WTC11 (cell line): ENCODE measurements at regions of chr14 and their contacts with region 1.

Region 1: DNA sequence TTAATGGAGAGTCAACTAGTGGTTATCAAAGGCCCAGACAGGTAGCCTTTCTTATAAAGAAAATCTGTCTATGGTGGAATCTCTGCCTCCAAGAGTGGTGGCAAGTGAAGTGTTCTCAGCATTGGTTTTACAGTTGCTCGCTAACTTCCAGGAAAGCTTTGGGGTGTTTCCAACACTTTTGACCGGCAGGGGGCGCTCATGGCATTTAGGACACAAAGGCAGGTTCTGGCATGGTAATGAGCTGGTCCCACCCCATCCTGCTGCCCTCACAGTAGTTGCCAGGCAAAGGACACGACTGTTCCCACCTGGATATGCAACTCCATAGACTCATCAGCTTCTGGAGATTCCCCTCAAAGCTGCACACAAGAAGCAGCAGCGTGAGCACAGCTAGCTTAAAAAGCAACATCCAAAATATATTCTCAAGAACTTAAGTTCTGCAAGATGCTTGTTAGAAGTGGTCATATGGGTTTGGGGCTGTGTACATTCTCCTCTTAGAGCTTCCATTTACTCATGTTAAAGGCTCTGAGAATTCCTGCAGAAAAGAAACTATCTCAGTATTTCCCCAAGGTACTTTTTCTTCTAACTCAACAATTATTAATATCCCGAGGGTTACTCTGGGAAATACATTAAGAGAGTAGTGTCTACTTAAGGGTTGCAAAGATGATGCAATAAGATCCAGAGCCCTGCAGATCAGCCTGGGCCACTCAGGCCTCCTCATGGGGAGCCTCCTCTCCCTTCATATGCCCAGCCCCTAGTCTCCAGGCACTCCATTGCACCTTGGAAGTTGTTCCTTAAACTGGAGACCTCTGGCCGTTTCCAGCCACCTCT is 14.8 kb downstream of the PROX2 start:
- DNase-seq: peak; percentile 95
- ATAC-seq: peak; percentile 95
- H3K4me3 Mint-ChIP-seq: no peak overlapping the region
- H3K27ac Mint-ChIP-seq: no peak overlapping the region
- H3K4me1 Mint-ChIP-seq: peaks cover 3% of the 10 kb centered on the region; the same call in 1 of the 2 replicates
- H3K27me3 Mint-ChIP-seq: no peaks in the 10 kb centered on the region; the same call in none of the 2 replicates
- CTCF ChIP-seq: peak; percentile 77

Region 2: GRCh38 chr14:74836251-74836960 is 24.7 kb before region 1 on chr14:
- CTCF ChIA-PET with region 1: interaction called, 11 read pairs
- POLR2A ChIA-PET with region 1: no interaction called
- DNase-seq: no peak
- ATAC-seq: no peak
- H3K4me3 Mint-ChIP-seq: no peak overlapping the region
- H3K27ac Mint-ChIP-seq: no peak overlapping the region
- H3K4me1 Mint-ChIP-seq: 0 out of 2 replicates have a peak, but pooled peaks cover under 1% of the 10 kb centered on the region
- H3K27me3 Mint-ChIP-seq: no peaks in the 10 kb centered on the region
- CTCF ChIP-seq: no peak

Region 3: GRCh38 chr14:74881431-74882361 is 20.6 kb after region 1 on chr14 and contains the start of gene DLST:
- CTCF ChIA-PET with region 1: interaction called, 133 read pairs
- POLR2A ChIA-PET with region 1: interaction called, 3 read pairs
- DNase-seq: peak; percentile 89
- ATAC-seq: peak; percentile 83
- H3K4me3 Mint-ChIP-seq: peak within 1 kb of the TSS; percentile 100
- H3K27ac Mint-ChIP-seq: peak within 1 kb of the TSS; percentile 98
- H3K4me1 Mint-ChIP-seq: peaks cover 51% of the 10 kb centered on the region
- H3K27me3 Mint-ChIP-seq: no peaks in the 10 kb centered on the region
- CTCF ChIP-seq: no peak
- total RNA-seq, gene DLST: 112 to 121 TPM (median 119 TPM) in 3 replicates

Region 4: DNA sequence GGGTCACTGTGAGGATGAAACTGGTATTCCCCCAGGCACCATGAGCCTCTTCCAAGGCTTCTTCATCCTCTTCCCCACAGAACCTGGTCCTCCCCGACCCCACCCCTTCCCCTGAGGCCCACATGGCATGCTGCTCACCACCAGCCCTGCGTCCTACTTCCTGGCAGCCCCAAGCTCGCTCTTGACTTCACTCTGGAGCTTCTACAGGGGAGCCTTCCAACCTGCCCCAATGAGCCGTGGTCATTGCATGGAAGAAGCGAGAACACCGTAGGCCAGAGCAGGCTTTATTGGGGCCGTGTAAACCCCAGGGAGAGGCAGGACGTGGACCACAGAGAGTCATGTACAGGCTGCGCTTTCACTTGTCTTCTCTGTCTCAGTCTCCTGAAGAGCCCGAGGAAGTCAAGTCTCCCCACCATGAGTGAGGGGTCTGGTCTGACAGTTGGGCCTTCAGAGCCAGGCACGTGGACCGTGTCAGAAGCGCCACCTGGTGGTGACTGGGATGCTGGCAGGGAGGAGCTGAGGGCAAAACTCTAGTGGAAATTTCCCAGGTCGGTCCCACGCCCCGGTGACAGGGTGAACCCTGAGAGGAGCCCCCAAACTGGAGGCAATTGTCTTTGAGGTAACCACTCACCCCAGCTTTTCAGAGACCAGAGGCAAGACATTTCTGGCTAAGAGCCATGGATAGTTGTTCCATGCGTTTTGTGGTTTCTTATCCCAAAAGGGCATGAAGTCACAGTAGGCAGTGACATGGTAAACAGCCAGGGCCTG is 44.4 kb after region 1 on chr14:
- CTCF ChIA-PET with region 1: interaction called, 241 read pairs
- POLR2A ChIA-PET with region 1: interaction called, 9 read pairs
- DNase-seq: peak; percentile 84
- ATAC-seq: peak; percentile 58
- H3K4me3 Mint-ChIP-seq: no peak overlapping the region
- H3K27ac Mint-ChIP-seq: 0 out of 2 replicates have a peak overlapping the region, but pooled peaks have one; percentile 41
- H3K4me1 Mint-ChIP-seq: peaks cover 13% of the 10 kb centered on the region
- H3K27me3 Mint-ChIP-seq: no peaks in the 10 kb centered on the region
- CTCF ChIP-seq: peak; percentile 95

Region 5: GRCh38 chr14:75002392-75003249 is 141.5 kb after region 1 on chr14 and contains the start of gene EIF2B2:
- CTCF ChIA-PET with region 1: interaction called, 13 read pairs
- POLR2A ChIA-PET with region 1: no interaction called
- DNase-seq: peak; percentile 100
- ATAC-seq: peak; percentile 98
- H3K4me3 Mint-ChIP-seq: peak within 1 kb of the TSS; percentile 90
- H3K27ac Mint-ChIP-seq: peak within 1 kb of the TSS; percentile 56
- H3K4me1 Mint-ChIP-seq: peaks cover 13% of the 10 kb centered on the region
- H3K27me3 Mint-ChIP-seq: no peaks in the 10 kb centered on the region
- CTCF ChIP-seq: no peak
- total RNA-seq, gene EIF2B2: 46.0 to 50.7 TPM (median 50.5 TPM) in 3 replicates